Stomach (tissue), 19 donors: ENCODE measurements at regions of chr2 and their contacts with region 1.

Region 1: DNA sequence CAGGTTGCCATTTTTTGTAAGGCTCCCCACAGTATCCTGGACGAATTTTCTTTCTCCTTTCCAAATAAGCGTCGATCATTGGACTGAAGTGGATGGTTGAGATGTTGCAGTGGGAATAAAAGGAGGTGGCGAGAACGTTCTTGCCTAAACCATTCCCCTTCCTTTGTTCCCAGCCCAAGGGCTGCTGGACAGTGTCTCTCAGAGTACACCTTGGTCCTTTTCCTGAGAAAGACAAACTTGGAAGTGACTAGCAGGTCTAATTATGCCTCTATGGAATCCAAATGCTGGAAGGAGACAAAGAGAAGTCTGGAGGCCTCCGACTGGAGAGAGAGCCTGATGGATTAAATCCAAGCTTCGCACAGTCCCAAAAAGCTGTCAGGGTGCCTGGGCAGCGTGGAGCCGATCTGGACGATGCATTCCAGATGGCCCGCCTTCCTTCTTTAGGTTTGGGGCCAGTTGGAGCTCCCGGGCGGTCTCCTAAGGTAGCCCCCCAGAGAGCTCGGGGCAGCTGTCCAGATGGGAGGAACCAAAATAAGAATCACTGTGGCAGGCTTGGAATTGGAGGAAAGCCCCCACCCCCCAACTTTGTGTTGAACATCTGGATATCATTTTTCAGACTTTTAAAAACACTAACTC is 186.8 kb downstream of the TMEM247 start:
- DNase-seq: peak in 1 of 2 donors; percentile 91
- H3K4me3 ChIP-seq: no peak overlapping the region
- H3K27ac ChIP-seq: peak overlapping the region in 2 of 5 donors; percentile 50 to 53
- H3K4me1 ChIP-seq: peaks cover 0 to 40% (median 5%) of the 10 kb centered on the region in 4 donors
- H3K27me3 ChIP-seq: no peaks in the 10 kb centered on the region
- CTCF ChIP-seq: no peak
- EP300 ChIP-seq: no peak
- POLR2A ChIP-seq: no peak

Region 2: GRCh38 chr2:46776687-46777327 is 110.6 kb after region 1 on chr2:
- intact Hi-C with region 1: loop called (anchors 10 kb)
- DNase-seq: peak; percentile 65 to 74
- H3K4me3 ChIP-seq: no peak overlapping the region
- H3K27ac ChIP-seq: no peak overlapping the region
- H3K4me1 ChIP-seq: peaks cover 0 to 26% (median 13%) of the 10 kb centered on the region in 4 donors
- H3K27me3 ChIP-seq: no peaks in the 10 kb centered on the region
- CTCF ChIP-seq: peak in 5 of 7 experiments; percentile 25 to 67 (median 50)
- EP300 ChIP-seq: no peak
- POLR2A ChIP-seq: no peak